Testis (tissue), 5 donors: ENCODE measurements at regions of chr19 and their contacts with region 1.

Region 1: DNA sequence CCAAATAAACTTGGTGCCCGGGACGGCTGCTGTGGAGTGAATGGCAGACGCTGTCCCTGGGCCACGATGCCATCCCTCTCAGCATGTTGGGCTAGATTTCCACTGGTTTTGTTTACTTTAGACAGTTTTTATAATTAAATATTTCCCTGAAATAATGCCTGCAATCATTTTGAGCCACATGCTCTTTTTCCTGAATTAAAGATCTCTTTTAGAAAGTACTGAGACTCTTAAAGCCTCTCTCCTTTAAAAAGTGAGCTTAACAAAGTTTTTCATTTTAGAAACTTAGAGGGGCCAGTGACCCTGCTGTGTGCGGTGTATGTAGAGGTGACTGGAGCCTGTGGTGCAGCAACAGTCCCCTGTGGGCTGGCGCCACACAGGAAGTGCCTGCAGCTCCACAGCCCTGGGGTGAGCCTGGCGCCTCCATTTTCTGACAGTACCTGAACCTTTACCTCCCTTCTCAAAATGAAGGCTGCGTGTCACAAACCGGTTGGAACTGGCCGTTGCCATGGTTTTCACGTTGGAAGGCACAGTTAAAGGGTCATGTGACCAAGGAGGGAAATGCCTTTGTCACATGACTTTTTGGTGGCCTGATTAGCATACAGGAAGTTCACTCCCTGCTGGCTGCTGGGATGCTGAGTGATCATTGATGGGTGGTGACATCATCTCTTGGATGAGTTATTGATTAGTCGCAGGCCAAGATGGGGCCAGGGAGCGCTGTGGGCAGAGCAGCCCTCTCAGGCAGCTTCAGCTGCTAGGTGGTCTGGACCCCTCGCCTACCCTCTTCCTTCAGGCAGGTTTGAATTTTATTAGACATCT is 26.3 kb downstream of the TSSK6 start:
- DNase-seq: peak; percentile 77
- H3K4me3 ChIP-seq: no peak overlapping the region
- H3K27ac ChIP-seq: peak overlapping the region; percentile 65 to 75
- H3K4me1 ChIP-seq: peaks cover 53% of the 10 kb centered on the region
- H3K27me3 ChIP-seq: no peaks in the 10 kb centered on the region
- CTCF ChIP-seq: no peak
- POLR2A ChIP-seq: no peak

Region 2: GRCh38 chr19:19366612-19367396 is 122.3 kb before region 1 on chr19:
- intact Hi-C with region 1: loop called (anchors 5 kb)
- DNase-seq: peak; percentile 70
- H3K4me3 ChIP-seq: no peak overlapping the region
- H3K27ac ChIP-seq: no peak overlapping the region
- H3K4me1 ChIP-seq: peaks cover 3% of the 10 kb centered on the region
- H3K27me3 ChIP-seq: no peaks in the 10 kb centered on the region
- CTCF ChIP-seq: peak; percentile 87 to 92 (median 90)
- POLR2A ChIP-seq: no peak

Region 3: DNA sequence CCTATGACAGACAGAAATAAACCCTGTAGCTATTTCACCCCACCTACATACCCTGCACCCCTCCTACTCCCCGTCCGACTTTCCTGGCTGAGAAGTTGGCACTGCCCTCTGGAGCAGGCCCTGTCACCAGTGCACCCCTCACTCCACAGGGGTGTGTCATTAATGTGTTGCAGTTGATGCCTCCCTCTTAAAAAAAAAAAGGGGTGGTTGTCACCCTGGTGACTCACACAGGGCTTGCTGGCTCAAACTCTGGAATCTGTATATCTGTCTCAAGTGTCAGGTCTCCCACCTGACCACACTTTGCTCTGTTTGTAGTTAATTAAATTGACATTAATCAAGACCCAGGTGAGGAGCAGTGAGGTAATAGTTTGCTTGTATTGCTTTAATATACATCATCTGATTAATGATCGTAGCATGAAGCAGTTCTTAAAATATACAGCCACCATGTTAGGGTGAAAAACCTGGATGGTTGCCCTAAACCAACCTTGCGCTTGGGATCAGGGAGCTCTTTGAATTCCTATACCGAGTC is 85.6 kb before region 1 on chr19:
- intact Hi-C with region 1: no loop called
- DNase-seq: no peak
- H3K4me3 ChIP-seq: no peak overlapping the region
- H3K27ac ChIP-seq: peak overlapping the region; percentile 2 to 93
- H3K4me1 ChIP-seq: peaks cover 45% of the 10 kb centered on the region
- H3K27me3 ChIP-seq: no peaks in the 10 kb centered on the region
- CTCF ChIP-seq: no peak
- POLR2A ChIP-seq: no peak

Region 4: DNA sequence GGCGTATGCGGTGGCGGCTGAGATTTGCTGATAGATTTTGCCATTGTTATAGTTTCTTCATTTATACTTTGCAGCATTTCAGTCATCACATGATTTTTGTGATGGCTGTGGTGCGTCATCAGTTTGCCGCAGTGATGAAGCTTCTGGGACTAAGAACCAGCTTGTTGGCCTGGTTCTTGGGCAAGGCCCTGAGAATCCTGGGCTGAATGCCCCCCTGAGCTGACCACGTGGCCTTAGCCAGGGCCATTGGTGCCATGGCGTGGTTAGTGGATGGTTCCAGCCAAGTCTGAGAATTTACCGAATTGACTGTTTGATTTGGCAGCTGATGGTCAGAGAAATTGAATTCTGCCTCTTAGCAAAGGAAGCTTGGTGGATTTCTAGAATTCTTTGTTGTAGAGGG is 65.8 kb before region 1 on chr19:
- intact Hi-C with region 1: no loop called
- DNase-seq: no peak
- H3K4me3 ChIP-seq: no peak overlapping the region
- H3K27ac ChIP-seq: no peak overlapping the region
- H3K4me1 ChIP-seq: peaks cover 11% of the 10 kb centered on the region
- H3K27me3 ChIP-seq: no peaks in the 10 kb centered on the region
- CTCF ChIP-seq: no peak
- POLR2A ChIP-seq: no peak

Region 5: DNA sequence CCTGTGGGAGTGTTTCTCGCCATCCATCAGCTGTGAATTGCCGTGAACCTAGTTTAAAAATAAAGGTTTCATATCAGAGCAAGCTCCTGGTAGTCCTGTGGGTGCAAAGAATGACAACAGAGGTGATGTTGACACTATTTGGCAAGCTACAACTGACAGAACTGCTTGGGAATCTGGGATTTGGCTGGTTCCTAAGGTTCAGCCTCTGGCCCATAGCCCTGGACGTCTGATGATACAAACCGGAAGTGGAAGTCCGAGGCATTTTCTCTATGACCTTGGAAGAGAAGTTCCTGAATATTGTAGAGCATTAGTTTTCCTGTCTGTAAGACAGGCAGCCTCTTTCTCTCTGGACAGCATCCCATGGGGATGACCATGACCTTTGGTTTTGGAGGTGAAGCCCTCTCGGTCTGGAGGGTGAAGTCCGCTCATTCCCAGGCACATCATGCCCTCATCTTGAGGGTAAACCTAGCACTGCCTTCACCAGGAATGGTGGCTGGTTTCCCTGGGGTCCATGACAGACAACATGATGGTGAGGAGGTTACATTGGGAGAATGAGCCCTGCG is 54.5 kb before region 1 on chr19:
- intact Hi-C with region 1: no loop called
- DNase-seq: peak; percentile 54
- H3K4me3 ChIP-seq: no peak overlapping the region
- H3K27ac ChIP-seq: no peak overlapping the region
- H3K4me1 ChIP-seq: peaks cover 12% of the 10 kb centered on the region
- H3K27me3 ChIP-seq: no peaks in the 10 kb centered on the region
- CTCF ChIP-seq: no peak
- POLR2A ChIP-seq: no peak